Head of caudate nucleus (tissue), 42 donors: ENCODE measurements at regions of chr19 and their contacts with region 1.

Region 1: DNA sequence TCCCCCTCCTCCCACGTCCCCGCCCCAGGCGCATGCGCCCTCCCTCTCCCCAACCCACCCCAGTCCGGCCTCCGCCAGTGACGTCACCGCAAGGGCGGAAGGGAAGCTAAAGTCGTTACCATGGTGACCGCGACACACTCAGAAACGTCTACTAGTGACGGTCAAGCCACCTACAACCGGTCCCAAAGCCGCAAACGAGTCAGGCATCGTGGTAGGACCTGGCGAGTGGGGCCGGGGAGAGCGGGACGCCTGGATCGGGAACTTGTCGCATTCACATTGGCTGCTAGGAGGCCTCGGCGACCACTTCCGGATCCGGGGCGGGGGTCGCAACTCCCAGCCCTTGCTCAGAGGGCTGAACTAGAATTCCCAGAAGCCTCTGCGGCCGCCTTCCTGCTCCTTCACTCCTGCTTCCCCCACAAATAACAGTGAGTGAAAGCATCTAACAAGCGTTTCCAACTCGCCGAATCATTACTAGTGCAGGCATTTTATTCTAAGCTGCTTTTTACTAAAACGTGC is at the start of gene ZSCAN5A:
- DNase-seq: peak; percentile 96 to 99 (median 98)

Region 2: DNA sequence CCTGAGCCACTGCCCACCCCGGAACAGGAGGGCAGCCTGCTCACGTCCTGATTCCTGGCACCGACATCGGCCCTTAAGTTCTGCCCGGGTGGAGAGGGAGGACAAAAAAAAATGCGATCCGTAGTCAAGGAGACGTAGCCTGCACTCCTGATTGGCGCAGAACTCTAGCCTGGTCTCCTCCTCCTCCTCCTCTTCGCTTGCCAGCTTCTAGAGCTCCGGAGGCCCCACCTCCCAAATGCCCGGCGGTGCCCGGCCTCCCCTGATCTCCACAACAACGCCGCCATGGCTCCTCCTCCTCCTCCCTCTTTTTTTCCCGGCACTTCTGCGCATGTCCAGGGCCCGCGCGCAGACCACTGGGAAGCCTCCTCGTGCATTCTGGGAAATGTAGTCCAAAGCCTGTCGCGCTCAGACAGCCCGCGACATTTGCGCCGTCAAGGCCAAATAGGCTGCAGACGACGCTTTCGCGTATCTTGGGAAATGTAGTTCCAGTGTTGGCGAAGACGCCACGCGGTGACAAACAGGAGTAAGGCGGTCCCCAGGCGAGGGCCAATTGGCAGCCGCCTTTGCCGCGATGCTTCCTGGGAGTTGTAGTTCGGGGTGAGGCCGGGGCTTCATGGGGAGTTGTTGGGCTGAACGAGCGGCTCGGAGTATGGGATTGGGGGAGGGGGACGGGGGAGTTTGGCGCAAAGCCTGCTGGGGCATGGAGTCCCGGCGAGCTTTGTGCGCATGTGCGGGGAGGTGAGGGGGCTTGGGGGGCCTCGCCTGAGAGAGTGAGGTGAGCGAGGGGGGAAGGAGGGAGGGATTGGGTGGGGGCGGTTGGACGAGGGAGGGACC is 173.8 kb before region 1 on chr19 and contains the start of gene ZNF444:
- intact Hi-C with region 1: loop called (anchors 10 kb)
- DNase-seq: peak; percentile 97 to 100 (median 99)

Region 3: GRCh38 chr19:56193981-56194640 is 120.5 kb before region 1 on chr19:
- intact Hi-C with region 1: no loop called
- DNase-seq: no peak

Region 4: DNA sequence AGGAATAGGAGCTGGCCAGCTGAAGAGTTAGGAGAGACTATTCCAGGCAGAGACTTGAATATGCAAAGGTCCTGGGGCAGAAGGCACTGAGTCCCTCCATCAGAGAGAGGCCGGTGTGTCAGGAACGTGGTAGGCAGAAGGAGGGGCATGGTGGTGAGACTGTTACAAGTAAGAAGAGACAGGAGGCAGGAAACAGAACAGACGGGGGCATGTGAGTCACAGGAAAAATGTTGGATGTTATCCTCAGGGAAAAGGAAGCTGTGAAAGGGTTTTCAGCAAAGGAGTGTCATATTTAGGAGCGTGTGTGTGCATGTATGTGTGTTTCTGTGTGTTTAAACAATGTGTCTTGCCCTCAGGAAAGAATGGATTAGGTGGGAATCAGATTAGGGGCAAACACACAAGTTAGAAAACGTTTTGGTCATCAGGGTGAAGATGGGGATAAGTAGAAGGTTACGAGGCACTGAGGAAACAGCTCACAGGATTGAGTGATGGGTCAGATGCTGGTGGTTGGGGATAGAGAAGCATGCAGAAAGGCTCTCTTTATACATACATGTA is 41.0 kb before region 1 on chr19:
- intact Hi-C with region 1: no loop called
- DNase-seq: no peak

Region 5: GRCh38 chr19:56367829-56368711 is 53.5 kb after region 1 on chr19:
- intact Hi-C with region 1: loop called (anchors 2 kb)
- DNase-seq: peak; percentile 80 to 96 (median 89)

Region 6: GRCh38 chr19:56393119-56394012 is 78.7 kb after region 1 on chr19 and contains the start of gene ZNF582:
- intact Hi-C with region 1: loop called (anchors 10 kb)
- DNase-seq: peak; percentile 89 to 98 (median 95)